ENCODE measurements at regions of chr3 and their contacts with region 1.

Region 1: GRCh38 chr3:150384296-150385212 is 23.5 kb upstream of the TSC22D2 start:
- DNase-seq: peak; percentile 80
- CTCF ChIP-seq: no peak

Region 2: GRCh38 chr3:150135287-150135721 is 249.2 kb before region 1 on chr3:
- CTCF ChIA-PET with region 1: no interaction called
- POLR2A ChIA-PET with region 1: no interaction called
- DNase-seq: no peak
- CTCF ChIP-seq: no peak

Region 3: GRCh38 chr3:150396956-150397550 is 12.5 kb after region 1 on chr3:
- CTCF ChIA-PET with region 1: interaction called, 21 read pairs
- POLR2A ChIA-PET with region 1: no interaction called
- DNase-seq: no peak
- CTCF ChIP-seq: no peak

Region 4: GRCh38 chr3:150610790-150611189 is 226.2 kb after region 1 on chr3:
- CTCF ChIA-PET with region 1: no interaction called
- POLR2A ChIA-PET with region 1: no interaction called
- DNase-seq: no peak
- CTCF ChIP-seq: no peak